ENCODE measurements at regions of chr3 and their contacts with region 1.

Region 1: GRCh38 chr3:196739671-196740480 is at the start of gene PAK2:
- DNase-seq: peak; percentile 88
- H3K4me3 Mint-ChIP-seq: peak within 1 kb of the TSS; percentile 100
- H3K27ac Mint-ChIP-seq: peak within 1 kb of the TSS; percentile 100
- H3K4me1 Mint-ChIP-seq: peaks cover 27% of the 10 kb centered on the region
- H3K27me3 Mint-ChIP-seq: no peaks in the 10 kb centered on the region
- total RNA-seq, gene PAK2: 82.5 and 86.5 TPM in 2 replicates

Region 2: DNA sequence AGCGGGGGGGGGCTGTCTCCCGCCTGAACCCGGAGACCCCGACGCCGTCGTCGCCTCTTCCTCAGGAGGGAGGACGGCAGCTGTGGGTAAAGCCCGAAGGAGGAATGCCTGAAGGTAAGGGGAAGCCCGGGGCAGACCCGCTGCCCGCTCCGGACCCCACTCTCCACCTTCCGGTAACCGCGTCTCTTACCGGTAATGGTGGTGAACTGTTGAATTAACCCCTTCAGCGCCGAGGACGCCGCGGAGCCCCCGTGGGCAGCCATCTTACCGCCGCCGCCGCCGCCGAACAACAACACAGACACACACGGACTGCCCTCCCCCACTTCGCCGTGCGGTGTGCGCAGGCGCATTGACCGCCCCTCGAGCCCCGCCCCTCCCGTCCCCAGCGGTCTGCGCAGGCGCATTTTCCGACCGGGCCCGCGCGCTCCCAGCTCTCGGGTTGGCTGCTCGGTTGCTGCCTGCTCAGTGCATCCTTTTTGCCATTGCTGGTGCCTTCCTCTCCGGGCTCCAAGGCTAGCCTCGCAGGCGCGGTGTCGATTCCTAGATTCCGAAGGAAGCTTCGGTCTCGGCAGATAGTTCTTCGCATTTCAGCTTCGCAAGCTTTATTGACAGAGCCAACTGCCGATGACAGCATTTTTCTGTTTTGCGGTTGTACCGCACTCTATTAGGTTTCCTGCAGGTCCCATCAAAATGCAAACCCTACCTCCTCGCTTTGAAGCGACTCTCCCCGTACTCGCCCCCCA is 307.6 kb before region 1 on chr3 and contains the start of gene UBXN7:
- intact Hi-C with region 1: loop called (anchors 1 kb)
- DNase-seq: peak; percentile 91
- H3K4me3 Mint-ChIP-seq: peak within 1 kb of the TSS; percentile 86
- H3K27ac Mint-ChIP-seq: peak within 1 kb of the TSS; percentile 97
- H3K4me1 Mint-ChIP-seq: peaks cover 23% of the 10 kb centered on the region
- H3K27me3 Mint-ChIP-seq: peaks cover 10% of the 10 kb centered on the region
- total RNA-seq, gene UBXN7: 54.8 and 60.9 TPM in 2 replicates

Region 3: DNA sequence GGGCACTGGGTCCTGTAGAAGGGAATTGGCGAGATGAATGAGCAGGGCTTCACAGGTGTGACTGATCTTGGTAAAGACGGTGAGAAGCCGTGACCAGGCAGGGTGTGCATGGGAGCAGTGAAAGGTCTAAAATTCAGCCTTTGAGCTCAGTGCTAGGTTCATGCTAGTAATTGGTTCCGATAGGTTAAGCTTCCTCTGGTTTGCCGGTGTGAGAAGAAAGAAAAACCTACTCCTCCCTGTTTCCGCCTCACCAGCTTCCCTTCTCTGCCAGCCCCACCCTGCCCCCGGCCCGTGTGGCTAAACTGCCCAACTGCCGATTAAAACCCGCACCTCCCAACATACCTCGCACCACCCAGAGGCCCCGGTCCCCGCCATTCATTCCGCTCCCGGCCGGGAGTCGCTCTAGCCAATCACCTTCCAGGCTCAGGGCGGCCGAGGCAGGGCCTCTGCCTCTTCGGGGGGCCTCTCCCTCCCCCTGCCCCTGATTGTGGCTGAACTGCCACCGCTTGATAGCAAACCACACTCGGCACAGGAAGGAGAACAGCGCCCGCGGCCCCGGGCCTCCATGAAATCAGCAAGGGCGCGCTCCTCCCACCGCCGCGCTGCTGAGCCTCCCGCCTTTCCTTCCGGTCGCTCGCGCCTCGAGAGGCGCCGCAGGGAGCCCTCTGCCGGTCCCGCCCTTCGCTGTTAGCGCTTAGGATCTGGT is 107.7 kb before region 1 on chr3:
- intact Hi-C with region 1: loop called (anchors 2 kb)
- DNase-seq: peak; percentile 90
- H3K4me3 Mint-ChIP-seq: peak overlapping the region; percentile 86
- H3K27ac Mint-ChIP-seq: peak overlapping the region; percentile 93
- H3K4me1 Mint-ChIP-seq: peaks cover 52% of the 10 kb centered on the region
- H3K27me3 Mint-ChIP-seq: no peaks in the 10 kb centered on the region

Region 4: GRCh38 chr3:196711838-196712513 is 27.9 kb before region 1 on chr3 and contains the starts of genes CEP19 and PIGX:
- intact Hi-C with region 1: loop called (anchors 1 kb)
- DNase-seq: peak; percentile 91
- H3K4me3 Mint-ChIP-seq: peak within 1 kb of the TSS; percentile 90
- H3K27ac Mint-ChIP-seq: peak within 1 kb of the TSS; percentile 98
- H3K4me1 Mint-ChIP-seq: peaks cover 49% of the 10 kb centered on the region
- H3K27me3 Mint-ChIP-seq: no peaks in the 10 kb centered on the region
- total RNA-seq, gene CEP19: 3.9 and 4.1 TPM in 2 replicates
- total RNA-seq, gene PIGX: 49.7 and 52.1 TPM in 2 replicates

Region 5: DNA sequence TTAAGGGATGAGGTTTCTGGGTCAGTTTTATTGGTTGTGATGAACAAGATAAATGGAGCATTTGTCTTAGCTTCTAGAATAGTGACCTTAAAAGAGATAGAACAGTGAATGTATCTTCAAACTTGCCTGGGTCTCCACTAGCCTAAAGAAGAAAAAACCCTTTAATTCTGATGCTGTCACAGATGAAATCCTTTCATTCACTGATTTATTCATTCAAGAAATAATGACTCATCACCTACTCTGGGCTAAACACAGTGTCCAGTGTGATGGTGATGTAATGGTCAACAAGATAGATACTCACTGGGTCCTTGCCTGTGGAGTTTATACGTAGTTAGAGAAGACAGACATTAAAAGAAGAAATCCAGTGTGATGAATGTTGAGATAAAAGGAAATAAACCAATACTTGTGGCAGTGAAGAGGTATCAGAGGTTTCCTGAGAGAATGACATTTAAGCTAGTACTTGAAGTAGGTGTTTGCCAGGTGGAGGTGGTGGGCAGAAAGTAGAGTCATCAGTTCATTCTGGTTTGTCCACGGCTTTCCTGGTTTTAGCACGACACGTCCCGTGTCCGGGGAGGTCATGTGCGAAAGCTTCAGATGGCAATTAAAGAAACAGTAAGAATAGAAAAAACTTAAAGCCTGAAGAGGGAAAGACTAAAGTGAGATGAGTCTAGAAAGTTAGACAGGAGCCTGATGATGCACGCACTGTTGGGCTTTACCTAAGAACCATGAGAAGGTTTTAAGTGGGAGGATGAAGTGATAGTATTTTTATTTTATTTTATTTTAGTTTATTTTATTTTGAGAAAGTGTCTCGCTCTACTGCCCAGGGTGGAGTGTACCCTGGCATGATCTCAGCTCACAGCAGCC is 18.2 kb after region 1 on chr3:
- intact Hi-C with region 1: loop called (anchors 2 kb)
- DNase-seq: no peak
- H3K4me3 Mint-ChIP-seq: no peak overlapping the region
- H3K27ac Mint-ChIP-seq: peak overlapping the region; percentile 27
- H3K4me1 Mint-ChIP-seq: peaks cover 48% of the 10 kb centered on the region
- H3K27me3 Mint-ChIP-seq: no peaks in the 10 kb centered on the region

Region 6: DNA sequence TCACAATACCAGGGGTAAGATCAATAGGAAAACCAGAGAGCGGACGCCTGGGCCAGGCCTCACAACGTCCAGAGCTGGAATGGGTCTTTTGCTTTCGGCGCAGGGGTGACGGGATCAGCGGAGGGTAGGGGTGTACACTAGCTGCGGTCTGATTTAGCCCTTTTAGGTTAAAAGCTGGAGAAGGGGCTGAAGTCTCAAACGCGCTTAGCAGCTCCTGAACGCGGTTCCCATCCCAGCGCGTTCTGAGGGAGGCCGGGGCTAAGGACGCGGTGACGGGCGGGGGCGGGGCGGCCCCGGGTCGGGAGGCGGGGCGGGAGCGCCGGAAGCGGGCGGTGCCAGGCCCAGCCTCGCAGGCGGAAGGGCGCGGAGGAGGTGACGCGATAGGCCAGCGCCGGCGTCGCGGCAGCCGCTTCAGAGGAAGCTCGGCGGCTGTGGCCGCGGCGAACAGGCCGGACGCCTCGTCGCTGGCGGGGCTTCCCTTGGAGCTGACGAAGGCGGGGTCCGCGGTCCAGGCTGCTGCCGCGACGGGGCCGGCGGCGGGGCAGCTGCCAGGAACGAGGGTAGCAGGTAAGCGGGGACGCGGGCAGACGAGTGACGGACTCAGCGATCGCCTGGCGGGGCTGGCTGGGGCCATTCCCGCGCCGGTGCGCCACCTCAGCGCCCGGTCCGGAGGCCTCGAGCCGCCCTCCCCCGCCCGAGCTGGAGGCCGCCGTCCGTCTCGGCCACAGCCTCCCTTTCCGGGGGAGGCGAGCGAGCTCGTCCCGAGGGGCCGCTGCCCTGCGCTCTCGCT is 127.8 kb after region 1 on chr3 and contains the start of gene SENP5:
- intact Hi-C with region 1: loop called (anchors 1 kb)
- DNase-seq: peak; percentile 86
- H3K4me3 Mint-ChIP-seq: peak within 1 kb of the TSS; percentile 100
- H3K27ac Mint-ChIP-seq: peak within 1 kb of the TSS; percentile 98
- H3K4me1 Mint-ChIP-seq: peaks cover 12% of the 10 kb centered on the region
- H3K27me3 Mint-ChIP-seq: peaks cover 4% of the 10 kb centered on the region
- total RNA-seq, gene SENP5: 45.3 and 50.7 TPM in 2 replicates

Region 7: DNA sequence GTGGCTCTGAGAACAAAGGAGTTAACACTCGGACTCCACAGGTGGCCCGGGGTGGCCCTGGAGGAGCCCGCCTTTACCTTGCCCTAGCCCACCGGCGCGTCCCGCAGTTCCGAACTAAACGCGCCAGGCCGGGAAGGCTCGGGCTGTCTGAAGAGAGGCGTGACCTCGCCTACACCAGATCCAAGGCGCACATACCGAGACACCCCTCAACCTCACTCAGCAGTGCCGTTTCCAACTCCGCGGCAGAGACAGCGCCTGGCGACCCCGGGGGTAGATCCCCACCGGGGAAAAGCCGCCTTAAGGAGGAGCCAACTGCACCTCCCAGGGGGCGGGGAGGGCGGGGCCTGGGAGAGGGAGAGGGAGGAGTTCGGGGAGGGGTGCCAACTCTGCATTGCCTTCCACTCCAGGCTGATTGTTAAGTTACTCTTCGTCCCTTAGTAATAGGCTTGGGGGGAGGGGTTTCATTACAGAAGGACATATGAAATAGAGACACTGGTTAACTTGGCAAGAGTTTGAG is 558.5 kb after region 1 on chr3 and contains the start of gene DLG1:
- intact Hi-C with region 1: loop called (anchors 2 kb)
- DNase-seq: peak; percentile 64
- H3K4me3 Mint-ChIP-seq: peak within 1 kb of the TSS; percentile 95
- H3K27ac Mint-ChIP-seq: peak within 1 kb of the TSS; percentile 96
- H3K4me1 Mint-ChIP-seq: peaks cover 39% of the 10 kb centered on the region
- H3K27me3 Mint-ChIP-seq: peaks cover 28% of the 10 kb centered on the region
- total RNA-seq, gene DLG1: 85.0 and 87.1 TPM in 2 replicates